AG04450 (cell line): ENCODE measurements at regions of chr10 and their contacts with region 1.

Region 1: DNA sequence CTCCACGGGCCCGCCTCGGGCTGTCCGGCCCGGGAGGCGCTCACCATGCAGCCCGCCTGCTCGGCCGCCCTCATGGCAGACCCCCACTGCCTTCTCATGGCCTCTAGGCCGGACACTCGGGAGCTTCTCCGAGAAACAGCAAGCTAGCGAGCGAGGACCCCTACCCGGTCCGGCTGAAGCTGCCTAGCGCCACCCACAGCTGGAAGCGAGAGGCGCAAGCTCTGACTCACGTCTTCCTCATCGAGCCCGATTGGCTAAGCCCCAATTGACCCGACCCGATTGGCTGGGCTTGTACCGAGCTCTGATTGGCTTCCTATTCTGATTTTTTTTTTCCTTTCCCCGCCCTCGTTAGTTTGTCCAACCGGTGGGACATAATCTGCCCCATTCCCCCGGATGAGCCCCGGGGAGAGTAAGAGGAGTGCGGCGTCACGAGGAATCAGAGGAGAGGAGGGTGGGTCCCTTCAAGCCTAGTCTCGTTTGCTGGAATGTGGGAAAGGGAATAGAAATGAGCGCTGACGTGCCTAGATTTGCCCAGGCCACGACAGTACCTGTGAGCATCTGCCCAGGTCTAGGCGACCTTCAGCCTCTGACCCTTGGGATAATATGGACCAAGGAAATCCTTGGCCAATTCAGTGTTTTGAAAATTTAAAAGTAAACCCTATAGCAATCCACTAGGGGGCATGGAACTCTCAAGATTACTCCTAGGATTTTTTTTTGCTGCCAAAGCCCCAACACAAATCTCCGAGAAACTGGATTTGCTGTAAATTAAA is at the start of gene TYSND1:
- DNase-seq: peak; percentile 96
- H3K4me3 ChIP-seq: peak within 1 kb of the TSS; percentile 68
- H3K27ac ChIP-seq: peak within 1 kb of the TSS; percentile 95
- H3K27me3 ChIP-seq: no peaks in the 10 kb centered on the region
- CTCF ChIP-seq: peak; percentile 76
- polyA plus RNA-seq, gene TYSND1: 2.7 and 3.4 TPM in 2 replicates

Region 2: DNA sequence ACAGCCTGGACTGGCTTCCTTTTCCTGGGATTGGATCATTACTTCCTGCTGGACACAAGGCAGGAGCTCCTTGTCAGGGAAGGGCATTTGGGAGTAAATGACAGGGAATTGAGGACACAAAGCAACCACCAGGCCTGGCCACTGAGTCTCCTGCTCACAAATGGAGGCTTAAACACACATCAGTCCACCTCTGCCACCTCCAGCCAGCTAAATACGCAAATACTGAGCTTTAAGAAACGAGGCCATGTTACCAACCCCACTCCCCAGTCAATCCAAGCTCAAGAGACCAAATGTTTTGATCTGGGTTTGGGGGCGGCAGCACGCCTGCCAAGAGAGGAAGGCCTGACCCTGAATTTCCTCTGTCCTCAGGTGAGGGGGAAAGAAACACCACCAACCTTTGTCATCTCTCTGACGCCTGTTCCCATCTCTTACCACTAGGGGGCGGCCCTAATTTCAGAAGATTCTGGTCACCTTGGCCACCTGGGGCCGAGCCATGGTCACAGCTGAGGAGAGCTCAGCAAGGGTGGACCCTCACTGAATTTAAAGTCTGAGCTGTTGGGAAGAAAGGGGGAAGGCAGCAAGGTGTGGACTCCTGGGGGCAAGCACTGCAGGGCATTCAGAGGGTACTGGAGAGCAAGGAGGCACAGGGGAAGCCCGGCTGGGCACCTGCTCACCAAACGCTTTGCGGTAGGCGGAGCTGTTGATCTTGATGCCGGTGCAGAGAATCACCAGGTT is 30.6 kb before region 1 on chr10:
- CTCF ChIA-PET with region 1: interaction called, 18 read pairs
- POLR2A ChIA-PET with region 1: interaction called, 7 read pairs
- DNase-seq: no peak
- H3K4me3 ChIP-seq: no peak overlapping the region
- H3K27ac ChIP-seq: no peak overlapping the region
- H3K27me3 ChIP-seq: no peaks in the 10 kb centered on the region
- CTCF ChIP-seq: peak; percentile 90

Region 3: GRCh38 chr10:70130878-70131559 is 15.7 kb before region 1 on chr10:
- CTCF ChIA-PET with region 1: interaction called, 14 read pairs
- POLR2A ChIA-PET with region 1: interaction called, 8 read pairs
- DNase-seq: no peak
- H3K4me3 ChIP-seq: 0 out of 2 replicates have a peak overlapping the region, but pooled peaks have one; percentile 1
- H3K27ac ChIP-seq: peak overlapping the region; percentile 52
- H3K27me3 ChIP-seq: no peaks in the 10 kb centered on the region
- CTCF ChIP-seq: no peak

Region 4: DNA sequence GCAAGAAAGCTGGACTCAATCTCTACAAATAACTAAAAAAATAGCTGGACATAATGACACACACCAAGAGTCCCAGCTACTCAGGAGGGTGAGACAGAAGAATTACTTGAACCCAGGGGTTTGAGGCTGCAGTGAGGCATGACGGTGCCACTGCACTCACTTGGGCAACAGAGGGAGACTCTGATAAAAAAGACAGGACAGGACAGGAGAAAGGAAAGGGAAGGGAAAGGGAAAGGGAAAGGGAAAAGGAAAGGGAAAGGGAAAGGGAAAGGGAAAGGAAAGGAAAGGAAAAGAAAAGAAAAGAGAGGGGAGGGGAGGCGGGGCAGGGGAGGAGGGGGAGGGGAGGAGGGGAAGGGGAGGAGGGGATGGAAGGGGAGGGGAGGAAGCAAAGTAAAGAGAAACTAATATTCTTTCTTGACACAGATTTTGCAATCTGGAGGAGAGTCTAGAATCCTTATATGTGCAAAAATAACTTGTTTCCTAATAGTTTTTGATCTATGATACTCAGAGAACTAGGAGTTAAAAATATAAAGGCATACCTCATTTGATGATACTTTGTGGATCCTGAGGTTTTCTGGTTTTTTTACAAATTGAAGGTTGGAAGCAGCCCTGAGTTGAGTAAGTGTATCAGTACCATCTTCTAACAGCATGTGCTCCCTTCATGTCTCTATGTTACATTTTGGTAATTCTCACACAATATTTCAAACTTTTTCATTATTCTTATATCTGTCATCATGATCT is 15.6 kb after region 1 on chr10:
- CTCF ChIA-PET with region 1: interaction called, 54 read pairs
- POLR2A ChIA-PET with region 1: interaction called, 6 read pairs
- DNase-seq: no peak
- H3K4me3 ChIP-seq: no peak overlapping the region
- H3K27ac ChIP-seq: no peak overlapping the region
- H3K27me3 ChIP-seq: no peaks in the 10 kb centered on the region
- CTCF ChIP-seq: no peak

Region 5: DNA sequence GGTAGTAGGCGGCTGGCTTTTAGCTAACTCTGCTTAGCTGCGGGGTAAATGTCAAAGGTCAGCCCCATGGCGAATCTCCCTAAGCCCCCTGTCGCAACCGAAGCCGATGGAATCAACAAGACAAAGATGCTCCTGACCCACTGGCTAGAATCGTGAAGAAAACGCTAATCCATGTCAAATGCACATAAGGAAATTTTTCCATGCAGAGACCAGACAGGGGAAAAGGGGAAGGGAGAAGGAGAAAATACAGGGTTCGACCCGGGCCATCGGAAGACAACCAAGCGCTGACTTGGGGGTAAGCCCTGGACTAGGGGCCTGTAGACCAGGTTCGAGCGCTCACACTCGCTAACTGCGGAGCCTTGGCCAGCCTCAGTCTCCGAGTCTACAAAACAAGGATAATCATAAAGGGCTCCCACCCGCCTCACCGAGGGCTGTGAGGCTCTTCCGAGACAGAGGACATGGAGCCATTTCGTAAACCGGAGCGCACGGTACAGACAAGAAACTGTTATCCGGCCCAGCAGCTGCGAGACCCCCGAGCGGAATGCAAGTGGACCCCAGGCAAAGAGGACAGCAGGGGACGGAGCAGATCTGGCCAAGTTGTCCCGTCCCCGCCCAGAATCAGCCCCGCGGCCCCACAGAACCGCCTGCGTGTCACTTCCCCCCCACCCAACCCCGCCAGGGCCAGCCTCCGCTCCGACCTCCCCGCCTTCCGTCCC is 23.1 kb after region 1 on chr10:
- CTCF ChIA-PET with region 1: interaction called, 37 read pairs
- POLR2A ChIA-PET with region 1: interaction called, 28 read pairs
- DNase-seq: no peak
- H3K4me3 ChIP-seq: peak overlapping the region; percentile 99
- H3K27ac ChIP-seq: peak overlapping the region; percentile 85
- H3K27me3 ChIP-seq: no peaks in the 10 kb centered on the region
- CTCF ChIP-seq: no peak

Region 6: DNA sequence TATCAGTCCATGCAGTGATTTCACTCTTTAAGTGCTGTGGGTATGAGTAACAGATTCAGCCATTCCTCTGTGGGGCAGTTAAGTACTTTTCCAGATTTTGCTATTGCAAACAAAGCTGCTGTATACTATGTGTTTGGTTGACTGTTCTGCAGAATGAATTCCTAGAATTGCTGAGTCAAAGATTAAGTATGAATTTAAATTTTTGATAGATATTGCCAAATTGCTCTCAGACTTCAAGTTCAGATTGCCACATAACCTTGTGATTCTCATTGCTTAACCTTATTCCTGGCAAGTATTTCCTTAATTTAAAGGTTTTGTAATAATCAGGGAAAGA is 45.3 kb after region 1 on chr10:
- CTCF ChIA-PET with region 1: interaction called, 16 read pairs
- POLR2A ChIA-PET with region 1: interaction called, 13 read pairs
- DNase-seq: peak; percentile 82
- H3K4me3 ChIP-seq: no peak overlapping the region
- H3K27ac ChIP-seq: peak overlapping the region; percentile 87
- H3K27me3 ChIP-seq: no peaks in the 10 kb centered on the region
- CTCF ChIP-seq: no peak

Region 7: DNA sequence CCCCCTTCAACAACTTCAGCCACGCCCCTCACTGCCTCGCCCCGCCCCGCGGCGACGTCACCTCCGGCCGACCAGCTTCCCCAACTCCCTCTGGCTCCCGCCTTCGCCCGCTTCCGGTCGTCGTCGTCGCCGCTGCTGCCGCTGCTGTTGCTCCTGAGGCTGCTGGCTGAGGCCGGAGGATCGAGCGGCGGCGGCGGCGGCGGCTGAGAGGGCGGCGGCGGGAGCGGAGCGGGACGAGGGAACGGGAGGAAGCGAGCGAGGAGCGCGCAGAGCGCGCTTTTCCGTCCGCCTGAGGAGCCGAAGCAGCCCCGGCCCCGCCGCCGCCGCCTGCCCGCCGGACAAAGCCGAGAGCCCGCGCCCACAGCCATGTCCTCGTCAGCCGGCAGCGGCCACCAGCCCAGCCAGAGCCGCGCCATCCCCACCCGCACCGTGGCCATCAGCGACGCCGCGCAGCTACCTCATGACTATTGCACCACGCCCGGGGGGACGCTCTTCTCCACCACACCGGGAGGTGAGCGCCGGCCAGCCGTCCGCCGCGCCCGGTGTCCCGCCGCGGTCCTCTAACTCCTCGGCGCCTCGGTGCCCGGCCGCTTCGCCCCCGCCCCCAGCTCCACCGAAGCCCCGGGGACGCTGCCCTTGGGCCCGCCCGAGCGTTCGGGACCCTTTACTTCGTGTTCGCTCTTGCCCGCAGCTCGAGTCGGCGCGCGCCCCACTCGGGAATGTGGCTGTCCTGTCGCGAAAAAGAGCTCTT is 257.5 kb after region 1 on chr10 and contains the start of gene EIF4EBP2:
- CTCF ChIA-PET with region 1: interaction called, 10 read pairs
- POLR2A ChIA-PET with region 1: interaction called, 6 read pairs
- DNase-seq: peak; percentile 84
- H3K4me3 ChIP-seq: peak within 1 kb of the TSS; percentile 91
- H3K27ac ChIP-seq: peak within 1 kb of the TSS; percentile 82
- H3K27me3 ChIP-seq: no peaks in the 10 kb centered on the region
- CTCF ChIP-seq: no peak
- polyA plus RNA-seq, gene EIF4EBP2: 27.3 and 31.2 TPM in 2 replicates